ENCODE measurements at regions of chr16 and their contacts with region 1.

Region 1: GRCh38 chr16:89217388-89218191 is at the start of gene ZNF778:
- DNase-seq: peak; percentile 82 to 83
- H3K4me3 ChIP-seq: peak within 1 kb of the TSS; percentile 76 to 89 (median 84)
- H3K27ac ChIP-seq: peak within 1 kb of the TSS; percentile 81 to 90 (median 83)
- H3K4me1 ChIP-seq: peaks cover 12 to 19% of the 10 kb centered on the region in 2 donors
- H3K27me3 ChIP-seq: no peaks in the 10 kb centered on the region
- CTCF ChIP-seq: no peak
- POLR2A ChIP-seq: peak in 1 of 2 donors; percentile 89
- total RNA-seq, gene ZNF778: 17.5 to 36.4 (median 30.9) TPM

Region 2: DNA sequence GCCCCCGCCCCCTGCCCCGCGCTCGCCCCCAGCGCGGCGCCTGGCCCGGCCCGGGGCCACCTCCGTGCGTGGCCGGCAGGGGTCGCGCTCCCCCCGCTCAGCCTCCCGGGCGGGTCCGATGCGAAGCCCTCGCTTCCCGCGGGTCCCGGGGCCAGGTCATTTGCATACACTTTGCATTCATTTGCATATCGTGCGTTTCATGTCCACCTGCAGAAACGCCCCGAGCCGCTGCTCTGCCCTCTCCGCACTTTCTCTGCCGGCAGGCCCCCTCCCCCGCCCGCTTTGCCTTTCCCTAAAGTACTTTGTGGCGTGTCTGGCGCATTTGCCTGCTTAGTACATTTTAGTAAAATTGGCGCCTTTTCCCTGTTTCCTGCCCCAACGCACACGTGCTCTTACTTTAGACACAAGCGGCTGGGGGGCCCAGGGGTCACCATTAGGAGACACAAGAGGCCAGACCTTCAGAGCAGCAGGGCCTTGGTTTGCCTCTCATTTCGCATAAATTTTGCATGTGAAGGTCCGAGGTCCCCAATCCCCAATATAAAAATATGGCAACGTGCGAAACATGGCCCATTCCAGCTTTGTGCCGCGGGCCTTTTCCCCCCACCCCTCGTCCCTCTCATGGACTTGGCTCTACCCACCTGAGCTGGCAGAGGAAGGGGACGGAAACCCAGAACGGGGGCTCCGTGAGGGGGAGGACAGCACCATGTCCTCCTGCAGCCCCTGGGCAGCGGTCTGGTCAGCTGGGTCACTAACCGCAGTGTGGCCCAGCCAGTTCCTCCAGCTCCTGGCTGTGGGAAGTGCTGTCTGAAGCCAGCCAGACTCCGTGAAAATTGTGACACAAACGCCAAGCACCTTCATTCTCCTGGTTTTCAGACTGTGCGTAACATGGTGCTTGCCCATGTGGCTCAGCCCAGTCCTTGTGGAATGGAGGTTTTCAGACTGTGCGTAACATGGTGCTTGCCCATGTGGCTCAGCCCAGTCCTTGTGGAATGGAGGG is 275.4 kb before region 1 on chr16:
- intact Hi-C with region 1: loop called (anchors 10 kb)
- DNase-seq: peak in 1 of 2 donors; percentile 25
- H3K4me3 ChIP-seq: peak overlapping the region in 1 of 3 donors; percentile 24
- H3K27ac ChIP-seq: no peak overlapping the region
- H3K4me1 ChIP-seq: peaks cover 0 to 26% of the 10 kb centered on the region in 2 donors
- H3K27me3 ChIP-seq: no peaks in the 10 kb centered on the region
- CTCF ChIP-seq: peak in 4 of 6 experiments; percentile 26 to 79 (median 39)
- POLR2A ChIP-seq: no peak

Region 3: GRCh38 chr16:88977018-88977811 is 240.4 kb before region 1 on chr16 and contains the start of gene CBFA2T3:
- intact Hi-C with region 1: no loop called
- DNase-seq: peak; percentile 37 to 49
- H3K4me3 ChIP-seq: no peak within 1 kb of the TSS
- H3K27ac ChIP-seq: no peak within 1 kb of the TSS
- H3K4me1 ChIP-seq: no peaks in the 10 kb centered on the region
- H3K27me3 ChIP-seq: no peaks in the 10 kb centered on the region
- CTCF ChIP-seq: no peak
- POLR2A ChIP-seq: no peak
- total RNA-seq, gene CBFA2T3: 1.3 to 3.8 (median 2.6) TPM

Region 4: GRCh38 chr16:88993166-88993761 is 224.3 kb before region 1 on chr16:
- intact Hi-C with region 1: no loop called
- DNase-seq: no peak
- H3K4me3 ChIP-seq: no peak overlapping the region
- H3K27ac ChIP-seq: no peak overlapping the region
- H3K4me1 ChIP-seq: no peaks in the 10 kb centered on the region
- H3K27me3 ChIP-seq: no peaks in the 10 kb centered on the region
- CTCF ChIP-seq: no peak
- POLR2A ChIP-seq: no peak

Region 5: GRCh38 chr16:89374393-89374960 is 156.9 kb after region 1 on chr16:
- intact Hi-C with region 1: no loop called
- DNase-seq: no peak
- H3K4me3 ChIP-seq: no peak overlapping the region
- H3K27ac ChIP-seq: no peak overlapping the region
- H3K4me1 ChIP-seq: peaks cover 16 to 24% of the 10 kb centered on the region in 2 donors
- H3K27me3 ChIP-seq: no peaks in the 10 kb centered on the region
- CTCF ChIP-seq: no peak
- POLR2A ChIP-seq: no peak

Measured in thyroid gland (tissue), 4 donors.